Natural killer cell (primary cell): ENCODE measurements at regions of chr17 and their contacts with region 1.

Region 1: DNA sequence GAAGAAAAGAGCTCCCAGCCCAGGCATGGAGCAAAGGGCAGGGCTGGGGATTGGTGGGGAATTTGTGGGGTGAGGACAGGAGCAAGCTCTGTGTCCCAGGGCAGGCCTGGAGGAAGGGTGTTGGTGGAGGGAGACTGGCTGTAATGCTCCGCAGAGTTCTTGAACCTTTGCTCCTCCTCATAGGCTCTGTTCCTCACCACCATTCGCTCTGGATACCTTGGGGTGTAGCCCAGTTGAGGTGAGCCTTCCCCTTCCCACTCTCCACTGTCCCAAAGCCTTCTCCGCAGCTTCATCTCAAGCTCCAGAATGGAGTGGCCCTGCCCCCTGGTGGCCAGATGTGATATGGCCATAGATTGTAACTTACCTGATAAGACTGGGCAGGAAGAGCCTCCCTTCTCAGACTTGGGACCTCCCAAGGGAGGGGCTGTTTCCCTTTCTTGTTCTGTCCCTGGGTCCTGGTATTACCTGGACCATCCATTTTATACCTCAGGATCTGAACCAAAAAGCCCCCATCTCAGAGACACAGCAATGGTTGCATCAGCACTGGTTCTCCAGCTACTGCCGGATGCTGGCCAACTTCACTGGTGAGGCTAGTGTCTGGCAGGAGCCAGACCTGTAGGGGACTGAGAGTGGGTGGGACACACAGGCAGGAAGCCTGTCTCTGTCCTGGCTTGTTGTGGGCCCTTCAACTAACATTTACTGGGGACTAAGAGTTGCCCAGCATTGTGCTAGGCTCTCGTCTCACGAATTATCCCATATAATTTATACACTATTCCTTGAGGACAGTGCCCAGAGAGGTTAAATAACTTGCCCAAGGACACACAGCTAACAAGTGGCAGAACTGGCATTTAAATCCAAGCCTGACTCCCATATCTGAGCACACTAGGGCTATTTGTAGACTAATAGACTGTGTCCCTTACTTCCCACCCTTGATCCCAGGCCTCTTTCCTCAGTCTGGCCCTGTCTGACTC is 19.1 kb upstream of the STAC2 start:
- DNase-seq: peak; percentile 82 to 92
- ATAC-seq: peak; percentile 87 to 98 (median 94)
- H3K4me3 ChIP-seq: no peak overlapping the region
- H3K4me3 Mint-ChIP-seq: no peak overlapping the region
- H3K27ac ChIP-seq: no peak overlapping the region
- H3K27ac Mint-ChIP-seq: no peak overlapping the region
- H3K4me1 ChIP-seq: peaks cover 16% of the 10 kb centered on the region
- H3K4me1 Mint-ChIP-seq: peaks cover 1 to 13% of the 10 kb centered on the region in 2 donors
- H3K27me3 ChIP-seq: no peaks in the 10 kb centered on the region
- H3K27me3 Mint-ChIP-seq: peaks cover 0 to 3% of the 10 kb centered on the region in 2 donors
- CTCF ChIP-seq: peak; percentile 94

Region 2: GRCh38 chr17:38982858-38983746 is 261.8 kb before region 1 on chr17:
- intact Hi-C with region 1: loop called (anchors 1 kb)
- DNase-seq: peak in 1 of 2 donors; percentile 84
- ATAC-seq: peak; percentile 68 to 80 (median 77)
- H3K4me3 ChIP-seq: no peak overlapping the region
- H3K4me3 Mint-ChIP-seq: no peak overlapping the region
- H3K27ac ChIP-seq: no peak overlapping the region
- H3K27ac Mint-ChIP-seq: no peak overlapping the region
- H3K4me1 ChIP-seq: no peaks in the 10 kb centered on the region
- H3K4me1 Mint-ChIP-seq: peaks cover 0 to 6% of the 10 kb centered on the region in 2 donors
- H3K27me3 ChIP-seq: no peaks in the 10 kb centered on the region
- H3K27me3 Mint-ChIP-seq: peaks cover 0 to 2% of the 10 kb centered on the region in 2 donors
- CTCF ChIP-seq: peak; percentile 87

Region 3: DNA sequence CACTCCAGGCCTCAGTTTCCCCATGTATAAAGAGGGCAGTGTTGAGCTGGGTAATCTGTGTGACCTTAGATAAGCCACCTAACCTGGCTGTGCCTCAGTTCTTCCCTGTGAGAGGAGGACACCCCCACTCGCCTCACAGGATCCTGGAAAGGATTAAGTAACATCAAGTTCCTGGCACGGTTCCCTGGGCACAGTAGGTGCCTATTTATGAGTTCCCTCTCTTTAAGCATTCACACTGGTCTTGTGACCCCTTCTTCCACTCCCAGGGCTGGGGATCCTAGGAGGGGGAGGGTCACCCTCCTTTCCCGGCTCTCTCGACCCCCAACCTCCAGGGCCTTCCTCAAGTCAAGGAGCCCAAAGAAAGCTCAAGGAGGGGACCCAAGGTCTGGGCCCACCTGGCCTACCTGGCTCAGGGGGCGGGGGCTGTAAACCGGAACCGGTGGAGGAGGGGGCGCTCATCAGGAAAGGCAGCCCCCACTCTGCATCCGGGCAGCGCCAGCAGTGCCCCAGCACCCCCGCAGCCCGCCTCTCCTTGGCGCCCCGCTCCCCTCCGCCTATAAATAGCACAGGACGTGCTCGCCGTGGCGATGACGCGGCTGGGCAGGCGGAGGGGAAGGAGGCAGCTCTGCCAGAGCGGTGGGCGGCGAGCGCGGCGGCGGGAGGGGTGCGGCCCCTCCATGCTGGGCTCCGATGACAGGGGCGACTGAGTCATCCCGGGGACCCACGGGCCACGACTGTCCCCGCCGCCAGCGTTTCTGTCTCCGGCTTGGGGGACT is 35.4 kb before region 1 on chr17:
- intact Hi-C with region 1: loop called (anchors 1 kb)
- DNase-seq: peak; percentile 69 to 79
- ATAC-seq: peak; percentile 74 to 93 (median 81)
- H3K4me3 ChIP-seq: peak overlapping the region; percentile 24
- H3K4me3 Mint-ChIP-seq: peak overlapping the region; percentile 25
- H3K27ac ChIP-seq: no peak overlapping the region
- H3K27ac Mint-ChIP-seq: peak overlapping the region in 1 of 2 donors; percentile 86
- H3K4me1 ChIP-seq: peaks cover 29% of the 10 kb centered on the region
- H3K4me1 Mint-ChIP-seq: peaks cover 0 to 14% of the 10 kb centered on the region in 2 donors
- H3K27me3 ChIP-seq: peaks cover 10% of the 10 kb centered on the region
- H3K27me3 Mint-ChIP-seq: peaks cover 0 to 15% of the 10 kb centered on the region in 2 donors
- CTCF ChIP-seq: no peak

Region 4: DNA sequence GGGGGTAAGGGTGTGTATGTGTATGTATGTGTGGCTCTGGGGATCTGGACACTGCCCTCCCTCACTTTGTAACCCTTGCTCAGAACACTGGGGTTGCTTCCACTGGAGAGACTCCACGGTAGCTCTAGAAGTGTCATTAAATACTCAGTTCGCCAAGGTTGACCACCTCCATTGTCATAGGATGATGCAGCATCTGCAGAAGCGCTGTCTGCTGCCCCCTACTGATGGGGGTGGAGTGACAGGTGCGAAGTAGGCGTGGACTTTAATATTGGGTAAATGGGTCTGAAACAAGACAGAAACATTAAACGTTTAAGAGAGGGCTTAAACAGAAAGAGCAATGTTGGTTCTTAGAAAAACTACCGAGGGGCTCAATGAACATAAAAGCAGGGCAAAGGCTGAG is 16.4 kb after region 1 on chr17:
- intact Hi-C with region 1: no loop called
- DNase-seq: peak in 1 of 2 donors; percentile 48
- ATAC-seq: no peak
- H3K4me3 ChIP-seq: no peak overlapping the region
- H3K4me3 Mint-ChIP-seq: no peak overlapping the region
- H3K27ac ChIP-seq: no peak overlapping the region
- H3K27ac Mint-ChIP-seq: no peak overlapping the region
- H3K4me1 ChIP-seq: no peaks in the 10 kb centered on the region
- H3K4me1 Mint-ChIP-seq: no peaks in the 10 kb centered on the region
- H3K27me3 ChIP-seq: no peaks in the 10 kb centered on the region
- H3K27me3 Mint-ChIP-seq: no peaks in the 10 kb centered on the region
- CTCF ChIP-seq: no peak